PC-9 (cell line): ENCODE measurements at regions of chr3 and their contacts with region 1.

Region 1: DNA sequence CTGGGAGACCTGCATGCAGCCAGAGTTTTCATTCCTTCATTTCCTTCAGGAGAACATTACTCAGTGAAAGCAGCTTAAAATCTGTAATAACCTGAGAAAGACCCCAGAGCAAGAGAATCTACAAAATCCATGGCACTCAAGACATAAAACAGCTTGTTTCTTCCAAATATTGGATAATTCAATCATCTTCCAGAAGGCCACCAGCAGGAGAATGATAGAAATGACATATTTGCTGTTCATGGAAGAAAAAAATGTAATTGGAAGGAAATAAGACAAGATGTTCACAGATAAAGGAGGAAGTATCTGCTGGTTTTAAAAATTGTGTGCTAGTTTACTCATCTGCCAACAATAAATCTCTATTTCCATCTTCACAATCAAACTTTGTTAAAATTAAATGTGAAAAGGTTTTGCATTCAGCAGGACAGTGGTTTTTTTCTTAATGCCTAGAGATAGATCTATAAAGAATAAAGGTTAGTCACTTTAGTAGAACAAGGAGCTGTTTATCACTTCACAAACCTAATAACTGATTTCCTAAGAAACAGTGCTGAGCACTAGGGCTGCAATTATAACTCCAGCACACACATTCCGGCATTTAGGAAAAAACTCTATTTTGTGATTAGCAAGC is 530.8 kb downstream of the NSUN3 start:
- DNase-seq: no peak
- H3K4me3 ChIP-seq: no peak overlapping the region
- H3K27ac ChIP-seq: no peak overlapping the region
- H3K4me1 ChIP-seq: no peaks in the 10 kb centered on the region
- H3K27me3 ChIP-seq: no peaks in the 10 kb centered on the region
- CTCF ChIP-seq: no peak

Region 2: GRCh38 chr3:94573337-94573736 is 20.3 kb before region 1 on chr3:
- CTCF ChIA-PET with region 1: no interaction called
- POLR2A ChIA-PET with region 1: no interaction called
- intact Hi-C with region 1: loop called (anchors 2 kb)
- DNase-seq: no peak
- H3K4me3 ChIP-seq: no peak overlapping the region
- H3K27ac ChIP-seq: no peak overlapping the region
- H3K4me1 ChIP-seq: no peaks in the 10 kb centered on the region
- H3K27me3 ChIP-seq: no peaks in the 10 kb centered on the region
- CTCF ChIP-seq: no peak

Region 3: DNA sequence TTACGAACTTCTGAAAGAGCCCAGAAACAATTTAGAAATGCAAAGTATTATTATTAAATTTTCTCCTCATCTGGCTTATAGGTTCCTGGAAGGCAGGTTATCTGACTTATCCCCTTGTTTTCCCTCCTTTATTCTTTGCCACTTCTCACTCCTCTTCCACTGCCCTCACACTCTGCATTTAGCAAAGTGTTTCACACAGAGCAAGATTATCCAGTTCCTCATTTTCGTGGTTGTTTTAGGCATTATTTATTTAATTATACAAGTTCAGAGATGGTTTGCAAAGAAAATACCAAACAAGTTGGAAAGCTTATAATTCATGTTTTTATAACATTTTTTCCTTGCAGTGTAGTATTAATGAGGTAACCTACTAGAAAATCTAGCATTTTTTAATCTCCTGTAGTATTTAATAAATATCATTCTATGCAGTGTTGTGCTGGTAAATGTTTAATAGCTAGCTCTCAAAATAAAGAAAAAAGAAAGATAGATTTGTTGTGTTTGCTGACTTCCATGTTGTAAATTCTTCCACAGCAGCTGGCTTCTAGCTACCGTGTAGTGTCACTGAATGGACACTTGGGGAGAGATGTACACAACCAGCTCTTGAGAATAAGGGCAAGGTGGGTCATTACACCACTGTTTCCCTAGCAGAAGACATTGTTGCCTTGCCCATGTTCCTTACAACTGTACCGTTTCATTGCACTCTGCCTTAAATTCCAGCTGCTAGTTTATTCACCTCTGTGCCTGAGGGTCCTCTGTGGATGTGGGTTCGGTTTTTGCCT is 14.3 kb after region 1 on chr3:
- CTCF ChIA-PET with region 1: no interaction called
- POLR2A ChIA-PET with region 1: no interaction called
- intact Hi-C with region 1: no loop called
- DNase-seq: no peak
- H3K4me3 ChIP-seq: no peak overlapping the region
- H3K27ac ChIP-seq: no peak overlapping the region
- H3K4me1 ChIP-seq: no peaks in the 10 kb centered on the region
- H3K27me3 ChIP-seq: no peaks in the 10 kb centered on the region
- CTCF ChIP-seq: no peak

Region 4: GRCh38 chr3:94909726-94910125 is 316.1 kb after region 1 on chr3:
- CTCF ChIA-PET with region 1: no interaction called
- POLR2A ChIA-PET with region 1: no interaction called
- intact Hi-C with region 1: no loop called
- DNase-seq: no peak
- H3K4me3 ChIP-seq: no peak overlapping the region
- H3K27ac ChIP-seq: no peak overlapping the region
- H3K4me1 ChIP-seq: no peaks in the 10 kb centered on the region
- H3K27me3 ChIP-seq: no peaks in the 10 kb centered on the region
- CTCF ChIP-seq: no peak